ENCODE measurements at regions of chr11 and their contacts with region 1.

Region 1: GRCh38 chr11:120210626-120211521 is at the start of gene OAF:
- DNase-seq: no peak
- ATAC-seq: peak; percentile 92
- H3K4me3 ChIP-seq: peak within 1 kb of the TSS; percentile 74
- H3K27ac ChIP-seq: no peak within 1 kb of the TSS; the same call in 1 of the 2 replicates
- H3K4me1 ChIP-seq: peaks cover 11% of the 10 kb centered on the region
- H3K27me3 ChIP-seq: peaks cover 0 to 1% of the 10 kb centered on the region in 2 experiments; a peak in 2 of 4 replicates
- CTCF ChIP-seq: peak in 1 of 3 experiments; percentile 28; a peak in 2 of 6 replicates
- EP300 ChIP-seq: no peak
- POLR2A ChIP-seq: no peak
- RAD21 ChIP-seq: no peak
- polyA plus RNA-seq, gene OAF: 0.10 to 0.22 TPM

Region 2: DNA sequence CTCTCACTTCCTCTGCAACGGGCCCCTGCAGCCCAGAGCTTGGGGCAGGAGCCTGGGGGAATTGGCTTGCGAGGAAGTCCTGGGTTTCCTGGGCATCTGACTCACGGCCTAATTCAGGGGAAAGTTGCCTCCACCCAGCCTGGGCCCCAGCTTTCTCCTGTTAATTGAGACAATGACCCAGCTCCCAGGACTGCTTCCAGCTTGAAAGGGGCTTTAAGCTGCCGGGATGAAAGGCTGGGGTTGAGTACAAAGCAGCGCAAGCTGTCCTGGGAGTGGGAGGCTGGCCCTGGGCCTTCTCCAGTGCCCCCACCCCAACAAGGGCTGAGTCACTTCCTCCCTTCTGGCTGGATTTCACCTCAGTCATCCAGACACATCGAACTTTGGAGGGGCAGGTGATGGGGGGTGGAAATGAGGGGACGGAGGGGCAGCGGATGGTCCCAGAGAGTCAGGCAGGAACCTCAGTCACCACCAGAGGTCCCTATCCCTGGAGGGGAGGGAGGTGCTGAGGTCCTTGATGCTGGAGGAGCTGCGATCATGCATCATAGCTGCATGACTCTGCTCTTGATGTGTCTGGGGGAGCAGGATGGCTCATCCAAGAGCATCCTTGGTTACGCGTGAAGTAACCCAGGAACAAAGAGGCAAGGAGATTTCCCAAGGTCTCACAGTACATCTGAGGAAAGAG is 30.2 kb before region 1 on chr11:
- CTCF ChIA-PET with region 1: no interaction called
- POLR2A ChIA-PET with region 1: no interaction called
- RAD21 ChIA-PET with region 1: no interaction called
- SMC1A ChIA-PET with region 1: no interaction called
- in situ Hi-C with region 1: no loop called
- intact Hi-C with region 1: loop called (anchors 5 kb)
- DNase-seq: no peak
- ATAC-seq: no peak
- H3K4me3 ChIP-seq: no peak overlapping the region
- H3K27ac ChIP-seq: no peak overlapping the region
- H3K4me1 ChIP-seq: no peaks in the 10 kb centered on the region
- H3K27me3 ChIP-seq: peaks cover 3 to 6% of the 10 kb centered on the region in 2 experiments; a peak in 2 of 4 replicates
- CTCF ChIP-seq: no peak
- EP300 ChIP-seq: no peak
- POLR2A ChIP-seq: no peak
- RAD21 ChIP-seq: no peak

Region 3: DNA sequence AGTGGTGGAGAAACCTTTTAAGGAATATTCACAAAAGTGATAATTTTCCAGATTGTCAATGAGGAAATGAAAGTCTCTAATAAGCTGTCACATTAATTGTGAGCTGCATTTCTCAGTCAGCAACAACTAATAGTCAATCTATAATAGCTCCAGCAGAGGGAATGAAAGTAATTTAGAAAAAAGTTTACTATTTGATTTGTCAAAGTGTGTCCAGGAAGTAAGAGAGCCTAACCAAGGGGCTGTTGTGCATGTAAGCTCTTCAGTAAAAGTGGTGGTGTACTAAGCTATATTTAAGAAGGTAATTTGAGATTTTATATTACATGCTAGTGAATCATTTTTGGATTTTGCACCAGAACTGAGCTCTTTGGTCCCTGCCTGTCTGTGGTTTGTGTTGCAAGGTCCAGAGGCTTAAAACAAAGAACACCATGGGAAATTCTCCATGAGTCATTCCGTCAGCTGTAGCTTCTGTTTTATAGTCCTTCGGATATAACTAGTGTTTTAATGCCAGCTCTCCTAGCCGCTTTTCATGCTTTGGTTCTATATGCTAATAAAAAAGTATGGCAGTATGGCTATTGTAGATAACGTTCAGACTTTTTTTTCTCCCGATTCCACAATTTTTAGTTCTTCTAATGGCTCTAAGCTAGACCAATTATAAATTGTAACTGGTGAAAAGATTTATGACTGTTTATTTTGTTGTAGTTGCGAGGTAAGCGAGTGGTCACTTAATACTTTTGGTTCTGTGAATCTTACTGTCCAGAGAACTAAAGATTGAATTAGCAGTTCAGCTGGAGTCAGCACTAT is 189.9 kb after region 1 on chr11:
- CTCF ChIA-PET with region 1: no interaction called
- POLR2A ChIA-PET with region 1: no interaction called
- RAD21 ChIA-PET with region 1: no interaction called
- SMC1A ChIA-PET with region 1: no interaction called
- in situ Hi-C with region 1: no loop called
- intact Hi-C with region 1: no loop called
- DNase-seq: peak; percentile 51
- ATAC-seq: peak; percentile 88
- H3K4me3 ChIP-seq: peak overlapping the region; percentile 10; the same call in 1 of the 2 replicates
- H3K27ac ChIP-seq: peak overlapping the region; percentile 48
- H3K4me1 ChIP-seq: peaks cover 8% of the 10 kb centered on the region
- H3K27me3 ChIP-seq: no peaks in the 10 kb centered on the region
- CTCF ChIP-seq: no peak
- EP300 ChIP-seq: peak in 1 of 2 experiments; percentile 34; a peak in 2 of 4 replicates
- POLR2A ChIP-seq: no peak
- RAD21 ChIP-seq: no peak

Measured in GM12878 (cell line).